Activated B cell treated with CpG ODN at 0.5 μM for 24 hours (primary cell): ENCODE measurements at regions of chr12 and their contacts with region 1.

Region 1: DNA sequence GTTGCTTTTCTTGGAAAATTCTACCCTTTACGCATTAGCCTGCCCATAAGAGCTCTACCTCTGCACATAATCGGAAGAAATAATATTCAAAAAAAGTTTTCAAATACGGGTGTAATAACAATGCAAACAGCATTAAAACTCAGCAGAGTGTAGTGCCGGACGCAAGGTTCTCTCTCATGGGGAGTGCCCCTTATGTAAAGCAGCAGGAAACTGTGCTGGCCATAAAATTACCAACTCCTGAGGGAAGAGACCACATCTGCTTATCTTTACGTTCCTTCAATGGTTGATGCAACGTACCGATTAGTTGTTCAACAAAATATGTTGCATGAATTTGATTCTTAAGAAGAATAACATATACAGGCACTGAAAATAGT is 118.7 kb upstream of the TMCC3 start:
- DNase-seq: peak; percentile 26
- ATAC-seq: peak; percentile 86
- H3K4me3 Mint-ChIP-seq: peak overlapping the region; percentile 86
- H3K27ac Mint-ChIP-seq: peak overlapping the region; percentile 98
- H3K4me1 Mint-ChIP-seq: peaks cover 68% of the 10 kb centered on the region
- H3K27me3 Mint-ChIP-seq: no peaks in the 10 kb centered on the region
- CTCF ChIP-seq: no peak

Region 2: GRCh38 chr12:94689002-94689645 is 79.9 kb before region 1 on chr12:
- CTCF ChIA-PET with region 1: no interaction called
- POLR2A ChIA-PET with region 1: interaction called, 13 read pairs
- intact Hi-C with region 1: no loop called
- DNase-seq: no peak
- ATAC-seq: no peak
- H3K4me3 Mint-ChIP-seq: no peak overlapping the region
- H3K27ac Mint-ChIP-seq: no peak overlapping the region
- H3K4me1 Mint-ChIP-seq: peaks cover 11% of the 10 kb centered on the region
- H3K27me3 Mint-ChIP-seq: no peaks in the 10 kb centered on the region
- CTCF ChIP-seq: no peak

Region 3: GRCh38 chr12:94725375-94726168 is 43.5 kb before region 1 on chr12:
- CTCF ChIA-PET with region 1: interaction called, 6 read pairs
- POLR2A ChIA-PET with region 1: interaction called, 3 read pairs
- intact Hi-C with region 1: loop called (anchors 2 kb)
- DNase-seq: no peak
- ATAC-seq: no peak
- H3K4me3 Mint-ChIP-seq: no peak overlapping the region
- H3K27ac Mint-ChIP-seq: peak overlapping the region; percentile 15
- H3K4me1 Mint-ChIP-seq: peaks cover 53% of the 10 kb centered on the region
- H3K27me3 Mint-ChIP-seq: no peaks in the 10 kb centered on the region
- CTCF ChIP-seq: no peak

Region 4: GRCh38 chr12:94805749-94806529 is 36.9 kb after region 1 on chr12:
- CTCF ChIA-PET with region 1: no interaction called
- POLR2A ChIA-PET with region 1: no interaction called
- intact Hi-C with region 1: loop called (anchors 2 kb)
- DNase-seq: no peak
- ATAC-seq: peak; percentile 92
- H3K4me3 Mint-ChIP-seq: peak overlapping the region; percentile 21
- H3K27ac Mint-ChIP-seq: peak overlapping the region; percentile 77
- H3K4me1 Mint-ChIP-seq: peaks cover 57% of the 10 kb centered on the region
- H3K27me3 Mint-ChIP-seq: no peaks in the 10 kb centered on the region
- CTCF ChIP-seq: no peak

Region 5: GRCh38 chr12:94831081-94831751 is 62.2 kb after region 1 on chr12:
- CTCF ChIA-PET with region 1: interaction called, 3 read pairs
- POLR2A ChIA-PET with region 1: interaction called, 15 read pairs
- intact Hi-C with region 1: loop called (anchors 1 kb)
- DNase-seq: peak; percentile 40
- ATAC-seq: peak; percentile 91
- H3K4me3 Mint-ChIP-seq: peak overlapping the region; percentile 81
- H3K27ac Mint-ChIP-seq: peak overlapping the region; percentile 99
- H3K4me1 Mint-ChIP-seq: peaks cover 58% of the 10 kb centered on the region
- H3K27me3 Mint-ChIP-seq: no peaks in the 10 kb centered on the region
- CTCF ChIP-seq: no peak

Region 6: GRCh38 chr12:95003213-95003920 is 234.3 kb after region 1 on chr12 and contains the start of gene NDUFA12:
- CTCF ChIA-PET with region 1: no interaction called
- POLR2A ChIA-PET with region 1: no interaction called
- intact Hi-C with region 1: loop called (anchors 1 kb)
- DNase-seq: peak; percentile 89
- ATAC-seq: peak; percentile 99
- H3K4me3 Mint-ChIP-seq: peak within 1 kb of the TSS; percentile 94
- H3K27ac Mint-ChIP-seq: peak within 1 kb of the TSS; percentile 90
- H3K4me1 Mint-ChIP-seq: peaks cover 35% of the 10 kb centered on the region
- H3K27me3 Mint-ChIP-seq: no peaks in the 10 kb centered on the region
- CTCF ChIP-seq: no peak
- total RNA-seq, gene NDUFA12: 80.2 and 81.7 TPM in 2 replicates